Left cardiac atrium (tissue), 4 donors: ENCODE measurements at regions of chr20 and their contacts with region 1.

Region 1: DNA sequence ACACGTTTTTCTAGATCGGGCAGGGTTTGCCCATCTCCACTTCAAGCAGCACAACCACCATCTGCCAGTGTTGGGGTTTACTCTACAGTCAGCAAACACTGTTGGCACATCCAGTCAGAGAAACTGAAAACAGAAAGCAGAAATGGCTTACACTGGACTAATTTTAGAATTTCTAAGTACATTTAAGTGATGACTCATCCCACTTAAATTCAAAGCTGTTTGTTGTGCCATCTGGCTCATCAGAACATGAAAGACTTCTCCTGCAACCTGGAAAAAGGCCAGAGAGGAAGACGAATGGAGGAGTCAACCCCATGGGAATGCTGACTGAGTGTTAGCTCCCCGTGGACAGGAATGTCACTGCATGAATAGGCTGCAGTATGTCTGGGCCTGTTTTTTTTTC is 21.8 kb downstream of the FAM209B start:
- DNase-seq: no peak
- ATAC-seq: peak; percentile 91 to 97

Region 2: GRCh38 chr20:56575961-56576360 is 21.1 kb after region 1 on chr20:
- intact Hi-C with region 1: loop called (anchors 2 kb)
- DNase-seq: no peak
- ATAC-seq: no peak

Region 3: GRCh38 chr20:56974499-56975236 is 419.8 kb after region 1 on chr20:
- intact Hi-C with region 1: loop called in 1 of 2 experiments (anchors 5 kb)
- DNase-seq: no peak
- ATAC-seq: no peak